Adrenal gland (tissue), 19 donors: ENCODE measurements at regions of chr12 and their contacts with region 1.

Region 1: GRCh38 chr12:48789858-48790326 is 1.0 kb upstream of the ADCY6 start:
- DNase-seq: no peak
- H3K4me3 ChIP-seq: peak overlapping the region in 2 of 4 donors; percentile 87 to 97
- H3K27ac ChIP-seq: no peak overlapping the region
- H3K4me1 ChIP-seq: peaks cover 17 to 24% of the 10 kb centered on the region in 2 donors
- H3K27me3 ChIP-seq: no peaks in the 10 kb centered on the region
- CTCF ChIP-seq: no peak
- POLR2A ChIP-seq: no peak

Region 2: DNA sequence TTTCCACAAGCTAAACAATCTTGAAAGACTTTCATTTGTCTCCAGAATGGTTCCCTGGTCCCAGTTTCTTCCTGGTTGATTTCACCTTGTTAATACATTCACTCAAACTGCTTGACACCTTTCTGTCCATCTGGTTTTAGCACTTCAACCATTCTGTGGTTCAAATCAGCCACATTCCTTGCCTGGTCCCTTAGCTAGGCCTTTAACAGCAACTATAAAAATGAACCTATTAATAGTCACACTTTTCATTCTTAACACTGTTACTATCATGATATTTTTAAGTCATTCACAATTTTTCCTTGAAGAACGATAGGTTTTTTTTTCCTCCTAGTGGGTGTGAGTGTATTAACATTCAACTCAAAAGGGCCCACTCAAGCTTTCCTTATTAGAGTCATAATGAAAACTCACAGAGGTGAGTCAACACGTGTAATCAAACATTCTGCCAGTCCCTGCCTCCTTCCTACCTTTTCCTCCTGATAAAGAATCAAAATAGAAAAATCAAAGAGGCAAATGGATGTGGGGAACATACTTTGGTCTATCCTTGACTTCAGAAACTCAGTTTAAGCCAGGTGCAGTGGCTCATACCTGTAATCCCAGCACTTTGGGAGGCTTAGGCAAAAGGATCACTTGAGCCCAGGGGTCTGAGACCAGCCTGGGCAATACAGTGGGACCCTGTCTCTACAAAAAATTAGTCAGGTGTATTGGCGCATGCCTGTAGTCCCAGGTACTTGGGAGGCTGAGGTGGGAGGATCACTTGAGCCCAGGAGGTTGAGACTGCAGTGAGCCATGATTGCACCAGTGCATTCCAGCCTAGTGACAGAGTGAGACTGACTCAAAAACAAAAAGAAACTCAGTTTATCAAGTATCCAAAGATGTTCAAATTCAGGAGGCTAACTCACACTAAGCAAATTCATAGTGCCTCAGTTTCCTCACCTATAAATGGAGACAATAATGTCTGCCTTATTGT is 38.8 kb before region 1 on chr12:
- intact Hi-C with region 1: loop called in 1 of 2 experiments (anchors 5 kb)
- DNase-seq: no peak
- H3K4me3 ChIP-seq: no peak overlapping the region
- H3K27ac ChIP-seq: no peak overlapping the region
- H3K4me1 ChIP-seq: peaks cover 0 to 9% of the 10 kb centered on the region in 2 donors
- H3K27me3 ChIP-seq: no peaks in the 10 kb centered on the region
- CTCF ChIP-seq: no peak
- POLR2A ChIP-seq: no peak